Activated B cell treated with CpG ODN at 0.5 μM for 24 hours (primary cell): ENCODE measurements at regions of chr19 and their contacts with region 1.

Region 1: GRCh38 chr19:45506246-45506990 is 861 bp upstream of the VASP start:
- DNase-seq: peak; percentile 99
- ATAC-seq: peak; percentile 72
- H3K4me3 Mint-ChIP-seq: peak overlapping the region; percentile 92
- H3K27ac Mint-ChIP-seq: peak overlapping the region; percentile 97
- H3K4me1 Mint-ChIP-seq: peaks cover 54% of the 10 kb centered on the region
- H3K27me3 Mint-ChIP-seq: no peaks in the 10 kb centered on the region
- CTCF ChIP-seq: no peak

Region 2: DNA sequence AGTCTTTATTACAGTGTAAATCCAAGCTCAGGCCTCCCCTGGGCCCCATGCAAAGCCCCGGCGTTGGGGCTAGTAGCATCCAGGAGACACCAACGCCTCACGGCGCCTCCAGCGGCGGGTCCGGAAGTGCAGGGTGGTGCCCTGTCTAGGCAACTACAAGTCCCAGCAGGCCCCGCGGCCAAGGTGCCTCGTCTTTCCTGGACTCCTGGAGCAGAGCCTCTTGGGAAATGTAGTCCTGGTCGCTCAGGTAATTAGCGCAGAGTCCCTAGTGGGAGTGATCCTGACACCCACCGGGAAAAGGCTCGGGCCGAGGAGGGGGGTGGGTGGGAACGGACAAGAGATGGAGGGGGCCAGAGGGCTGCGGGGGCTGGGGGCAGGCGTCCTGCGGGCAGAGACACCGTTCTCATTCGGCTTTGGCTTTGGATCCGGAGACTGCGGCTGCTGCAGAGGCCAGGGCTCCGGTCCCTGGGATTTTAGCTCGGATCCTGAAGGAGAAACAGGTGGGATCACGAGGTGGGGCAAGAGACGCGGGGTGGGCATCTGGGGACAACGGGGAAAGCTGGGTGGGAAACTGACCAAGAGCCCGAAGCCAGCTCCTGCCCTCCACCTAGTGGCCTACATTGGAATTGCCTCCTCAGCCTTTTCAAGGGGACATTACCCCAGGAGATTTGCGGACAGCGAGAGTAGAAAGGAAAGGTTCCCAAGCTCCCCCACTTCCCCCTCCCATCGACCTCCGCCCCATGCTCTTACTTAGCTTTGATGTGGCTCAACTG is 20.9 kb before region 1 on chr19:
- CTCF ChIA-PET with region 1: interaction called, 5 read pairs
- POLR2A ChIA-PET with region 1: interaction called, 4 read pairs
- intact Hi-C with region 1: loop called (anchors 1 kb)
- DNase-seq: peak; percentile 96
- ATAC-seq: peak; percentile 99
- H3K4me3 Mint-ChIP-seq: peak overlapping the region; percentile 91
- H3K27ac Mint-ChIP-seq: peak overlapping the region; percentile 74
- H3K4me1 Mint-ChIP-seq: peaks cover 8% of the 10 kb centered on the region
- H3K27me3 Mint-ChIP-seq: peaks cover 3% of the 10 kb centered on the region
- CTCF ChIP-seq: peak; percentile 84

Region 3: GRCh38 chr19:45558399-45558878 is 52.0 kb after region 1 on chr19:
- CTCF ChIA-PET with region 1: interaction called, 3 read pairs
- POLR2A ChIA-PET with region 1: interaction called, 4 read pairs
- intact Hi-C with region 1: loop called (anchors 5 kb)
- DNase-seq: peak; percentile 26
- ATAC-seq: peak; percentile 99
- H3K4me3 Mint-ChIP-seq: no peak overlapping the region
- H3K27ac Mint-ChIP-seq: no peak overlapping the region
- H3K4me1 Mint-ChIP-seq: peaks cover 25% of the 10 kb centered on the region
- H3K27me3 Mint-ChIP-seq: no peaks in the 10 kb centered on the region
- CTCF ChIP-seq: no peak

Region 4: DNA sequence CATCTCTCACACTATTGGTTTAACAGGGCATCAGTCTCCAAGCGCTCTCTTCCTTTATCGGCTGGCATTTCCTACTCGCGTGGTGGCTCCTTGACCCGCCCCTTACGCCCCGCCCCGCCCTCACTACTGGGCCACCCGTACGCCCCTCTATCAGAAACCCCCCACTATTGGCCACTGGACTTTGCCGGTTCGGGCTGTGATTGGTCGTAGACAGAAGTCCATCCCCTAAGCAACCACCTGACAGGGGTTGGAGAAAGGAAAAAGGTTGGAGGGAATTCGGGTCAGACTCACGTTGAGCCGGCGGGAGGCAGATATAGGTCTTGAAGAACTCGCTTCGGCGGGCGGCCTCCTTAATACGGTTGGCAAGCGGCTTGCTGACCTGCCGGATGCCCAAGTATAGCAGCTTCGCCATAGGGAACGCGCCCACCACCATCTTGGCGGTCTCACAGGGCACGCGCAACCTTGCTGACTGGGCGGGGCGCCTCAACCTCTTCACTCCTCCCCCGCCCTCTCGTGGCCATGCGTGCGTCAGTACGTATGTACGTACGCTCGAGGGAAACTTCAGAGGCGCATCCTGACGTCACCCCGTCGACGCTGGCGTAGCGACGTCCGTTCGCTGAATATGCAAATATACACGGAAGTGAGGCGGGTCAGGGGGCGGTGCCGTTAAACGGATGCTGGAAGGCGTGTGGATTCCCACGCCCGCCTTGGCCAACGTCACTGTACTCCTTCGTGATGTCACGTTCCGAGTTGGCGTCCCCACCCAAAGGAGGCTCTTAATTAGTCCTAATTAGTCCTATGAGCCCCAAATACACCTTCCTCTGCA is 78.1 kb after region 1 on chr19 and contains the start of gene OPA3:
- CTCF ChIA-PET with region 1: no interaction called
- POLR2A ChIA-PET with region 1: no interaction called
- intact Hi-C with region 1: loop called (anchors 1 kb)
- DNase-seq: peak; percentile 94
- ATAC-seq: peak; percentile 89
- H3K4me3 Mint-ChIP-seq: peak within 1 kb of the TSS; percentile 96
- H3K27ac Mint-ChIP-seq: peak within 1 kb of the TSS; percentile 98
- H3K4me1 Mint-ChIP-seq: peaks cover 13% of the 10 kb centered on the region
- H3K27me3 Mint-ChIP-seq: peaks cover 5% of the 10 kb centered on the region
- CTCF ChIP-seq: no peak
- total RNA-seq, gene OPA3: 12.0 and 14.4 TPM in 2 replicates